ENCODE measurements at regions of chr12 and their contacts with region 1.

Region 1: GRCh38 chr12:68231229-68231628 is 5.6 kb upstream of the IL26 start:
- DNase-seq: no peak
- H3K4me3 ChIP-seq: no peak overlapping the region
- H3K27ac ChIP-seq: no peak overlapping the region
- H3K4me1 ChIP-seq: peaks cover 0 to 2% (median under 1%) of the 10 kb centered on the region in 4 donors
- H3K27me3 ChIP-seq: no peaks in the 10 kb centered on the region
- CTCF ChIP-seq: no peak
- EP300 ChIP-seq: no peak
- POLR2A ChIP-seq: no peak

Region 2: DNA sequence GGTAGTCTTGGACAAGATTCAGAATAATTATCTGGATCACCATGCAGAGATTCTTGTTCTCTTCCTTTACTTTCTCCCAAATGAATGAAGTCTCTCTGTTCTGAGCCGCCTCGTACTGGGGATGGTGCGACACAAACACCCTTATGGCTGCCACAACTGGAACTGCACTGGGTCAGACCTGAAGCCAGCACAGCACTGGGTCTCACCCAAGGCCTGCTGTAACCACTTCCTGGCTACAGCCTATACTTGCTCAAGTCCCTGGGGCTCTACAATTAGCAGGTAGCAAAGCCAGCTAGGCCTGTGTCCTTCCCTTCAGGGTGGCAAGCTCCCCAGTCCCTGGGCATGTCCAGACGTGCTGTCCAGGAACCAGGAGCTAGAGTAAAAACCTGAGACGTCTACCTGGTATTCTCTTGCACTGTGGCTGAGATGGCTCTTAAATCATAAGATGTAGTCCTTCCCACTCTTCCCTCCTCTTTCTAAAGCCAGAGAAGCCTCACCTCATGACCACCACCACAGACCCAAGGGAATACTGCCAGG is 99.3 kb before region 1 on chr12:
- in situ Hi-C with region 1: no loop called
- intact Hi-C with region 1: no loop called
- DNase-seq: no peak
- H3K4me3 ChIP-seq: no peak overlapping the region
- H3K27ac ChIP-seq: no peak overlapping the region
- H3K4me1 ChIP-seq: no peaks in the 10 kb centered on the region
- H3K27me3 ChIP-seq: no peaks in the 10 kb centered on the region
- CTCF ChIP-seq: no peak
- EP300 ChIP-seq: no peak
- POLR2A ChIP-seq: no peak

Region 3: DNA sequence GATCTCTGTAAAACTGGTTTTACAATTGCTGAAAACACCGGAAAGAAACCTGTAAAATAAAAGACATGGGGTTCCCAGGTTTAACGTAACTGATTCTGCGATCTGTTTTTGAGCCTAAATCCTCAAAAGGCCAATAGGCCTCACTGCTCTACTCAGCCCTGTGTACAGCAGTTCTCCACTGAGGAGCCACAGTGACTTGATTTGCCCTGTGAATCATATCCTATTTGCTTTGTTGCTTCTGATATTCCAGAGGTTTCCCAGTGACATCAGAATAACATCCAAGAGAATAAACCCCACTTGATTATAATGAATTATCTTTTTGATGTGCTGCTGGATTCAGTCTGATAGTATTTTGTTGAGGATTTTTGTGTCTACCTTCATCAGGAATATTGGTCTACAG is 73.4 kb after region 1 on chr12:
- in situ Hi-C with region 1: loop called in 1 of 4 experiments (anchors 5 kb)
- intact Hi-C with region 1: no loop called
- DNase-seq: no peak
- H3K4me3 ChIP-seq: no peak overlapping the region
- H3K27ac ChIP-seq: no peak overlapping the region
- H3K4me1 ChIP-seq: no peaks in the 10 kb centered on the region
- H3K27me3 ChIP-seq: no peaks in the 10 kb centered on the region
- CTCF ChIP-seq: no peak
- EP300 ChIP-seq: no peak
- POLR2A ChIP-seq: no peak

Measured in transverse colon (tissue), 4 donors.